OCI-LY7 (cell line): ENCODE measurements at regions of chr10 and their contacts with region 1.

Region 1: DNA sequence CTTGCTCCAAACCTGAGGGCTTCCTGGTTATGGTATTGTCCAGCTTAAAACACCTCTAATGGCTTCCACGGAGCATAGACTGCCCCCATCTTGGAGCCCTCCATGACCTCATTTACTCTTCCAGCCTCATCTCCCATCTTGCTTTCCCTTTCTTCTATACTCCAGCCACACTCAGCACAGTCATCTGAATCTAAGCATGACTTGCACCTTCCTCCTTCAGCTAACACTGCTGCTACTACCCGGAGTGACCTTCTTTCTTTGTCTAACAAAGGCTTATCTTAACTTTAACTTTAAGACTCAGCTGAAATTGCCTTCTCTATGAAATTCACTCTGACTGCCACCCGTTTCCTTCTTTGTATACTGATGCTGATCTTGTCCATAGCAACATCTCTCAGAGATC is 135.1 kb downstream of the FAM107B start:
- DNase-seq: no peak
- H3K4me3 ChIP-seq: no peak overlapping the region
- H3K27ac ChIP-seq: no peak overlapping the region
- H3K4me1 ChIP-seq: peaks cover 10% of the 10 kb centered on the region
- CTCF ChIP-seq: no peak

Region 2: DNA sequence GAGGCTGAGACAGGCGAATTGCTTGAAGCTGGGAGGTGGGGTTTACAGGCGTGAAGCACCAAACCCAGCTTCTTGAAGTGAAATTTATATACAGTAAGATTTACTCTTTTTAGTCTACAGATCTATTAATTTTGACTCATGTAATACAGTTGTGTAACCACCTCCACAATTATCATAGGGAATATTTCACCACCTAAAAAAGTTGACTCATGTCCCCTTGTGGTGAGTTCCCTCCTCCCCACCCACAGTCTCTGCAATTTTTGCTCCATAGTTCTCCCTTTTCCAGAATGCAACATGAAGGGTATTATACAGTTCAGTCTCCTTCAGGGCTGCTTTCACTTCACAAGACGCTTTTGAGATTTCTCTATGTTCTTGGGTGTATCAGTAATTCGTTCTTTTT is 21.8 kb before region 1 on chr10:
- CTCF ChIA-PET with region 1: no interaction called
- POLR2A ChIA-PET with region 1: interaction called, 11 read pairs
- intact Hi-C with region 1: no loop called
- DNase-seq: no peak
- H3K4me3 ChIP-seq: no peak overlapping the region
- H3K27ac ChIP-seq: no peak overlapping the region
- H3K4me1 ChIP-seq: peaks cover 28% of the 10 kb centered on the region
- CTCF ChIP-seq: 0 out of 2 replicates have a peak, but pooled peaks have one; percentile 23